T-cell (primary cell): ENCODE measurements at regions of chr5 and their contacts with region 1.

Region 1: DNA sequence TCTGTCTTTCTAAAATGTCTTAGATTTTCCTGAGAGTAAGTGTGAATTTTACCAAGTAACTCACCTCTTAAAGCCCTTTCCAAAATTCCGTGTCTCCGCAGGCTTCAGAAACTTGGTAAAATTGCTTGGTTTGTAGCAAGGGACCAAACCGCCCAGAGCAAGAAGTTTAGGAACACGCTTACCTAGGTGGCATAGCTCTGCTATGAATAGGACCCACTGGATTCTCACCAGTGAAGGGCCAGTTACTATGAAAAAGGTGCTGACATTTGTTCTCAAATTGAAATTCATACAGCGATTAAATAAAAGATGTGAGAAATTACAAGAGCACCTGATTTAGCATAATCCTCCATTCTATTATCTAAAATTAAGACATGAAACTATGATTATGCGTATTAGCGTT is 6.7 kb downstream of the NME5 start:
- DNase-seq: no peak
- ATAC-seq: no peak
- H3K4me3 ChIP-seq: no peak overlapping the region
- H3K4me3 Mint-ChIP-seq: peak overlapping the region in 2 of 3 donors; percentile 75 to 76
- H3K27ac ChIP-seq: no peak overlapping the region
- H3K27ac Mint-ChIP-seq: no peak overlapping the region
- H3K4me1 ChIP-seq: no peaks in the 10 kb centered on the region
- H3K4me1 Mint-ChIP-seq: peaks cover 0 to 4% (median 0%) of the 10 kb centered on the region in 3 donors
- H3K27me3 ChIP-seq: peaks cover 0 to 8% of the 10 kb centered on the region in 2 experiments
- H3K27me3 Mint-ChIP-seq: peaks cover 5 to 17% of the 10 kb centered on the region in 2 donors

Region 2: DNA sequence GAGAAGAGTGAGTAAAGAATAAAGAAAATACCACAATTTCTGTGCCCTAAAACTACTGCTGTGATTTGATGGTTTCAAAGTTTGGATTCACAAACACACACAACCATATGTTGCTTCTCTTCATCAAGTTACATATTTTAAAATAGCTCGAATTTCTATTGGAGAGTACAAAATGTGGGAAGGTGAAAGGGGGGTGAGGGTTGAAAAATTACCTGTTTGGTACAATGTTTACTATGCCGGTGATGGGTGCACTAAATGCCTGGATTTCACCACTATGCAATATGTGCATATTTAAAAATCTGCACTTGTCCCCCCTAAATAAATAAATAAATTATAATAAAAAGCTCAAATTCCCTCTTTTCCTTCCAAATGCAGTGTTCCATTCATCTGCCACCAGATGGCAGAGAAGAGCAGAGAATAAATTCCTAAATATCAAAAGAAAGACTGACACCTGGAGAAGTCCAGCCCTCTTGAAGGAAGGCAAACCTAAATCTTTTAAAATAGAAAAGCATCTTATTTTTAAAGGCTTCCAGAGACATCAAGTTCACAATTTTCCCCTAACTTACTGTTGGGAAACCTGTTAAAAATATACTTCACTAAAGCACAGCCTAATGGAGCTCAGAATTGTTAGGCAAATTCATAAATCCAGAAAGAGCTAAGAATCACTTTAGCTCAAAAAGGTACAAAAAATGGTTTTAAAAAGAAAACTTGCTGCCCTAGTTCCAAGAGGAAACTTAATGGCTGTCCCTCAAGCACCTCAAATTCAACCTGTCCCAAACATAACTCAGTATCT is 353.6 kb before region 1 on chr5:
- CTCF ChIA-PET with region 1: interaction called, 4 to 21 read pairs
- POLR2A ChIA-PET with region 1: no interaction called
- DNase-seq: peak in 1 of 35 experiments; percentile 55
- ATAC-seq: no peak
- H3K4me3 ChIP-seq: no peak overlapping the region
- H3K4me3 Mint-ChIP-seq: no peak overlapping the region
- H3K27ac ChIP-seq: no peak overlapping the region
- H3K27ac Mint-ChIP-seq: no peak overlapping the region
- H3K4me1 ChIP-seq: no peaks in the 10 kb centered on the region
- H3K4me1 Mint-ChIP-seq: no peaks in the 10 kb centered on the region
- H3K27me3 ChIP-seq: no peaks in the 10 kb centered on the region
- H3K27me3 Mint-ChIP-seq: peaks cover 0 to under 1% of the 10 kb centered on the region in 2 donors

Region 3: GRCh38 chr5:138077065-138077696 is 55.4 kb before region 1 on chr5:
- CTCF ChIA-PET with region 1: interaction called, 12 to 32 read pairs
- POLR2A ChIA-PET with region 1: interaction called in 1 of 2 experiments, 4 read pairs
- DNase-seq: peak in 31 of 35 experiments; percentile 2 to 74 (median 24)
- ATAC-seq: peak in 1 of 4 experiments; percentile 55
- H3K4me3 ChIP-seq: no peak overlapping the region
- H3K4me3 Mint-ChIP-seq: no peak overlapping the region
- H3K27ac ChIP-seq: no peak overlapping the region
- H3K27ac Mint-ChIP-seq: no peak overlapping the region
- H3K4me1 ChIP-seq: peaks cover 7 to 8% of the 10 kb centered on the region in 2 experiments
- H3K4me1 Mint-ChIP-seq: peaks cover 8 to 16% (median 8%) of the 10 kb centered on the region in 3 donors
- H3K27me3 ChIP-seq: peaks cover 0 to 3% of the 10 kb centered on the region in 2 experiments
- H3K27me3 Mint-ChIP-seq: no peaks in the 10 kb centered on the region